ENCODE measurements at regions of chr11 and their contacts with region 1.

Region 1: DNA sequence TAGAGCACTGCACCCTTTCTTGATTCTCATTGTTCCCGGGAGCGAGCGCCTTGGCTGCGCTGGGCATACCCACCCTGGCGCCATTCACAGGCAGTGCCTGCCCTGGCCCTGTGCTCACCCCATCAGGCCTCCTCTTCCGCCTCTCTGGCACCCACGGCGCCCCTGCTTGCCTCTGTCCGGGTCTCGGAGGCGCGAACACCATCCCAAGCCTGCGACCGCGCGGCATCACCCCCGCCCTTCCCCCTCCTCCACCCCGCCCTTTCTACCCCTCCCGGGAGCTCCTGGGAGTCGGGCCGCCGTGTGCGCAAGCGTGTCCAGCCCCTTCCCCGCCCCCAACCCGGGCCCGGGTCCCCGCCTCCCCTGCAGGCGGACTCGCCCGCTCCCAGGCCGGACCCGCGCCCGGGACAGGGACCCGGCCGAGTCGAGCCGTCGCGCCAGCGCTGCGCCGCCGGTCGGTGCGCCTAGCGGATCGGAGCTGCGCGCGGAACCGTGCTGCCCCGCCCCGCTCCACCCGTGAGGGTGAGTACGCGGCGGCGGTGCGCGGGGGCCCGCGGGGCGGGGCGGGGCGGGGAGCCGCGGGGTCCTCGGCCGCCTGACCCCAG is at the start of gene ST3GAL4:
- DNase-seq: peak; percentile 76 to 90
- H3K4me3 ChIP-seq: peak within 1 kb of the TSS; percentile 58 to 72
- H3K27ac ChIP-seq: peak within 1 kb of the TSS; percentile 85
- H3K4me1 ChIP-seq: peaks cover 0 to 89% (median 71%) of the 10 kb centered on the region in 4 donors
- H3K27me3 ChIP-seq: no peaks in the 10 kb centered on the region
- CTCF ChIP-seq: no peak

Region 2: GRCh38 chr11:126303623-126304456 is 51.6 kb before region 1 on chr11 and contains the start of gene DCPS:
- intact Hi-C with region 1: loop called (anchors 2 kb)
- DNase-seq: peak; percentile 88 to 95
- H3K4me3 ChIP-seq: peak within 1 kb of the TSS; percentile 61 to 80
- H3K27ac ChIP-seq: peak within 1 kb of the TSS; percentile 80 to 81
- H3K4me1 ChIP-seq: peaks cover 0 to 12% (median 4%) of the 10 kb centered on the region in 4 donors
- H3K27me3 ChIP-seq: no peaks in the 10 kb centered on the region
- CTCF ChIP-seq: no peak

Region 3: GRCh38 chr11:126332131-126332711 is 23.2 kb before region 1 on chr11:
- intact Hi-C with region 1: no loop called
- DNase-seq: peak; percentile 72 to 81
- H3K4me3 ChIP-seq: no peak overlapping the region
- H3K27ac ChIP-seq: no peak overlapping the region
- H3K4me1 ChIP-seq: no peaks in the 10 kb centered on the region
- H3K27me3 ChIP-seq: no peaks in the 10 kb centered on the region
- CTCF ChIP-seq: no peak

Region 4: DNA sequence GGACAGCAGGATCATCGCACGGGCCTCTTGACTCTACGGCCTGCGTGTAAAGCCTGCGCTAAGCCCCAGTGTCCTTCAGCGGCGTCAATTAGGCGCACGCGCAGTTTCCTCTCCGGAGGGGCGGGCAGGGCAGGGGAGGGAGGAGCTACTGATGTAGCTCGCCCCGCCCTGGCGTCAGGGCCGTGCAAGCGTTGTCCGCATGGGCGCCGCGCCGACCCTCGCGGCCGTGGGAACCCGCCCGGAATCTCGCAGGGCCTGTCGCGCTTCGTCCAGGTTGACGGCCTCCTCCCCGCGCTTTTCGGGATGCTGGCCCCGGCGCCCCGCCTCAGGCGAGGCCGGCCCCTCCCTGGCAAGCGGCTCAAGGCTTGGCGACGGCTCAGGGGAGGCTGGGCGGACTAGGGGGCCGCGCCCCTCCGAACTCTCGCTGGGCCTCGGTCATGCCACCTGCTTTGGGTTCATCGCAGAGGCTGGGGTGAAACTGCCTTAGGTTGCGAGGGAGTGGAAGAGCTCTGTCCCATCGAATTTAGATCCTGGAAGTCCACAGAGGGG is 61.2 kb after region 1 on chr11:
- intact Hi-C with region 1: loop called (anchors 5 kb)
- DNase-seq: peak; percentile 86 to 94
- H3K4me3 ChIP-seq: peak overlapping the region; percentile 57
- H3K27ac ChIP-seq: peak overlapping the region; percentile 74 to 83
- H3K4me1 ChIP-seq: peaks cover 0 to 44% (median 37%) of the 10 kb centered on the region in 4 donors
- H3K27me3 ChIP-seq: no peaks in the 10 kb centered on the region
- CTCF ChIP-seq: no peak

Measured in tibial artery (tissue), 4 donors.